ENCODE measurements at regions of chr14 and their contacts with region 1.

Region 1: GRCh38 chr14:21978184-21978998 is 304.8 kb upstream of the OR4E1 start:
- H3K4me3 ChIP-seq: no peak overlapping the region
- H3K27ac ChIP-seq: no peak overlapping the region
- H3K4me1 ChIP-seq: no peaks in the 10 kb centered on the region
- CTCF ChIP-seq: peak; percentile 54

Region 2: DNA sequence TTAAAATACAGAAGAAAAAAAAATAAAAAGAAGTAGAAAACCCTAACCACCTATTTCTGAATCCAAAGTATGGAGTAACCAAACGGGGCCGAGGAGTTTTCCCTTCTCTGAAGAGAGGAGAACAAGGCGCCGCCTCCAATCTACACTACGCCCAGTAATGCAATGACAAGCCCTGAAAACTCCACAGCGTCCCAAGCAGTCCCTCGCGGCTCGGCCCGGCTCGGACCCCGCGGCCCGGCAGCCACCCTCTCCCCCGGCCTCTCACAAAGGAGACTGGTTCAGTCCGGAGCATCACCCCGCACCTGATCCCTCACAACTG is 522.8 kb before region 1 on chr14:
- CTCF ChIA-PET with region 1: no interaction called
- POLR2A ChIA-PET with region 1: no interaction called
- H3K4me3 ChIP-seq: peak overlapping the region; percentile 94
- H3K27ac ChIP-seq: peak overlapping the region; percentile 82
- H3K4me1 ChIP-seq: peaks cover 6% of the 10 kb centered on the region; the same call in 1 of the 2 replicates
- CTCF ChIP-seq: no peak

Region 3: DNA sequence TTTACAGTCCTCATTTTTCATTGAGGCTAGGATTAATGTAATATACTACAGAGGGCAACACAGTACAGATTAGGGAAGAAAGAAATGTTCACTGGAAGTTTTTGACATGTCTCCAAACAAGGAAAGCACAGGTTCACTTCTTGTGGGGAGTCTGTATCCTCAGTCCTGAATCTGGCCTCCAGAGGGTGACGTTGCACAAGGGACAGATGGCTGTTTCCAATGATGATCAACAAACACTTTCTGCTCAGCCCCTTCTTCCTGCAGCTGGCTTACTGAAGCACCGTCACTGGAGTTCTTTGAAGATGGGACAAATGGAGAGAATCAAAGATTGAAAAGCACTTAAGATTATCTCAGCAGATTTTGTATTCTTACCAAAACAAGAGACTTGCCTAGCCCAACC is 181.5 kb before region 1 on chr14:
- CTCF ChIA-PET with region 1: no interaction called
- POLR2A ChIA-PET with region 1: no interaction called
- H3K4me3 ChIP-seq: no peak overlapping the region
- H3K27ac ChIP-seq: no peak overlapping the region
- H3K4me1 ChIP-seq: no peaks in the 10 kb centered on the region
- CTCF ChIP-seq: no peak

Region 4: GRCh38 chr14:21965042-21965441 is 13.3 kb before region 1 on chr14:
- CTCF ChIA-PET with region 1: interaction called, 17 read pairs
- POLR2A ChIA-PET with region 1: no interaction called
- H3K4me3 ChIP-seq: no peak overlapping the region
- H3K27ac ChIP-seq: no peak overlapping the region
- H3K4me1 ChIP-seq: no peaks in the 10 kb centered on the region
- CTCF ChIP-seq: no peak

Region 5: GRCh38 chr14:21997300-21997699 is 18.9 kb after region 1 on chr14:
- CTCF ChIA-PET with region 1: interaction called, 24 read pairs
- POLR2A ChIA-PET with region 1: no interaction called
- H3K4me3 ChIP-seq: no peak overlapping the region
- H3K27ac ChIP-seq: no peak overlapping the region
- H3K4me1 ChIP-seq: no peaks in the 10 kb centered on the region
- CTCF ChIP-seq: no peak

Region 6: DNA sequence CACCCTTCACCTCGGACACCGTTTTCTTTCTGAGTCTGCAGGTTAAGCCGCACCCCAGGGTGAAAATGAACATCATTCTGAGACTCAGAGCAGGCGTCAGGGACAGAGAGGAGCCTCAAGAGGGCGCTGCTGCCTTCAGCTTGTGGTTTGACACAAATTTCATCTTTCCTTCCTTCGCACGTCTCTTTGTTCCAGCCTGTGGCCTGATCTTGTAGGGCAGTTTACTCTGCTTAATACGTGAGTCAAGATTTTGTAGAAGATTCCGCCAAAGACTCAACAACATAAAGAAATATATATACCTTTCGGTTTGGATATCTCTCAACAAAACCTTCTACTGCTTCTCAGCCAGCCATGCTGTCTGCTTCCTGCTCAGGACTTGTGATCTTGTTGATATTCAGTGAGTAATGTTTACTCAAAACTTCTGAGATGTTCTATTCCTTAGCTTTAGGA is 24.5 kb after region 1 on chr14:
- CTCF ChIA-PET with region 1: interaction called, 14 read pairs
- POLR2A ChIA-PET with region 1: no interaction called
- H3K4me3 ChIP-seq: no peak overlapping the region
- H3K27ac ChIP-seq: no peak overlapping the region
- H3K4me1 ChIP-seq: no peaks in the 10 kb centered on the region
- CTCF ChIP-seq: no peak

Region 7: DNA sequence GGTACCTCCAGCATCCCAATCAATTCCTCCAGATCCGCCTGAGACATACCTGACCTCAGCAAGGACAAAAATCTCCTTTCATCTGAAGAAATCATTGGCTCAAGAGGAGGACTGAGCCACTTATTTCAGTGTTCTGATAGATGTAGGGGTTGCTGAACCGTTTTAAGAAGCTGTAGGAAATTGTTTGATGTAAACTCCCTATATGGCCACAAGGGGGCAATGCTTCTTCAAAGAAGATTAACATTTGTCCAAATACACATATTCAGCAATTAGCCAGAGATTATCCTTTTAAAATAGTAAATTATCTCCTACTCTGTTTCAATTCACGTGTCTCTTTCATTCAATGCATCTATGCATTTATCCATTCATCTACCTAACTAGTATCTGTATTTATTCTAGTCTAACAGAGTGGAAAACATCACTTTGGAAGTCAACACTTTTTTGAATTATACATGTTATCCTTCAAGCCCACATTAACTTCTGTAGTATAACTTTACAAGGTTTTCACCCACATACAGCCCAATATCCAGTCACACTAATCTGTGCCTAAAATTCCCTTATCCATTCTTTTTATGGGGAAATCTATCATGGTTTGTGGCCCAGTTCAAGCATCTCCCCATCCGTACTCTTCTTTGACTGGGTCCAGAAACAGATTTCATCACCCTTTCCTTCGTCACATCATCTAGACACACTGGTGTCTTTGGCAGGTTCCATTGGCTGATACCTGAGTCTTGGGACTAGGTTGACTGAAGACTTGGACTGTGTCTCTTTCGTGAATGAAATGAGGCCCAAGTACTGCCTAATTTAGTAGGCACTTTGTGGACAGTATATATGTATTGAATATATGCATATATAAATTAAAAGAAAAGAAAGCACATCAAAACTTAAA is 106.2 kb after region 1 on chr14:
- CTCF ChIA-PET with region 1: no interaction called
- POLR2A ChIA-PET with region 1: no interaction called
- H3K4me3 ChIP-seq: no peak overlapping the region
- H3K27ac ChIP-seq: no peak overlapping the region
- H3K4me1 ChIP-seq: no peaks in the 10 kb centered on the region
- CTCF ChIP-seq: no peak

Measured in HEK293 (cell line).